IMR-90 (cell line): ENCODE measurements at regions of chr19 and their contacts with region 1.

Region 1: DNA sequence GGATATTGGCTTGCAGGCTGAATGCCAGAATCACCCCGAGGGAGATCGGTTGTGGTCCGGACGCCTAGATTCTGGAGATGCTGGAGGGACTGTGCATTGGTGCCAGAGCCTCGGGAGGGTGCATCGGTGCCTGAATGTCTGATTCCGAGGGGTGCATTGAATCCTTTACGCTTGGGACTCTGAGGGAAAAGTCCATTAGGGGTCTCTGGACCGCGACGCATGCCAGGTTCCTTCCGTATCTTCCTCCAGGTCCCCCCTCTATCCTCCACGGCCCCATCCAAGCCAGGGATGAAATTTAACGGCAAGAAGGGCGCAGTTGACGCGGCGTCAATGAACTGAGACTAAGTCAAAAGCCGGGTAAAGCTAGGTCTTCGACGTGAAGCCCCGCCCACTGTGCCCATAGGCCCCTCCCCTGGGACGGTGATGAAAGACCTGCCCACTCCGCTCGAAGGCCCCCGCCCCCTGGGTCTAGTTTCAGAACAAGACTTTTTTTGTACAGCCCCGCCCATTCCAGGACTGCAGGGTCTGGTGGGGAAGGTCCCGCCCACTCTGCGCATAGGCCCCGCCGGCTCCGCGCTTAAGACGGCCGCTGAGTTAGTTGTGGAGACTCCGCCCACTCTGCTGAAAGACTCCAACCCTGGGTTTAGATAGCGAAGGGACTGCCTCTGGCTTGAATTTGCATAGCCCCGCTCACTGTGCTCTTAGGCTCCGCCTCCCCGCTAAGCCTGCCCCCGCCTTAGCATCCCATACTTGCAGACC is 737 bp downstream of the ZNF575 start:
- DNase-seq: peak; percentile 99
- ATAC-seq: peak; percentile 91
- H3K4me3 ChIP-seq: peak overlapping the region; percentile 55
- H3K27ac ChIP-seq: peak overlapping the region; percentile 42
- H3K4me1 ChIP-seq: peaks cover 3% of the 10 kb centered on the region; the same call in 1 of the 2 replicates
- H3K27me3 ChIP-seq: no peaks in the 10 kb centered on the region
- CTCF ChIP-seq: no peak
- POLR2A ChIP-seq: no peak
- RAD21 ChIP-seq: no peak

Region 2: DNA sequence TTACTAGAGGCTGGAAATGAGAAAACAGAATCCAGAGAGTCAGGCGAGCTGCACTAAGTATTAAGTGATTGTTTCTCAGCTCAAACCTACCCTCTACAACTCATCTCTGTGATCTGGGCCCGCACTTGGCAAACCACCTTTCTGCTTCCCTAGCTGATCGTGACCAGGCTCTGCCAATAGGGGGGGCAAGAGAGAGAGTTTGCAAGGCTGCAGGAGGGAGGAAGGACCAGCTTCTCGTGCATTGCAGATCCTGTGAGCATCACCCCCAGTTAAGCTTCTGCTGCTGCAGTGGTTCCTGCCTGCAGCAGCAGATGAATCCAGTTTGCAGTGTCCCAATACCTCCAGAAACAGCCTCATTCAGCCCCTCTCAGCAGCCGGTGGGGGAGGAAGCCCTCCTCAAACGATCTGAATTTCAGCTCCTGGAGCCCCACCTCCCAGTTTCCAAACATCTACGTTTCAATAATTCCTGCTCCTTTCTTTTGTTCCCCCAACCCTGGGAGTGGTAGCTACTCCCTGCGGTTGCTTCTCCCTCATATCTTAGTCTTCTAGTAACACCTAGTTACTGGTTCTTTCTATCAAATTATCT is 21.6 kb after region 1 on chr19:
- CTCF ChIA-PET with region 1: interaction called, 15 read pairs
- POLR2A ChIA-PET with region 1: no interaction called
- dilution Hi-C with region 1: no loop called
- in situ Hi-C with region 1: no loop called
- intact Hi-C with region 1: no loop called
- DNase-seq: peak; percentile 66
- ATAC-seq: peak; percentile 91
- H3K4me3 ChIP-seq: no peak overlapping the region
- H3K27ac ChIP-seq: no peak overlapping the region
- H3K4me1 ChIP-seq: peaks cover 2% of the 10 kb centered on the region; the same call in 1 of the 2 replicates
- H3K27me3 ChIP-seq: no peaks in the 10 kb centered on the region
- CTCF ChIP-seq: peak; percentile 73
- POLR2A ChIP-seq: no peak
- RAD21 ChIP-seq: peak; percentile 72